ENCODE measurements at regions of chr6 and their contacts with region 1.

Region 1: GRCh38 chr6:52130440-52130839 is 43.0 kb upstream of the PKHD1 start:
- DNase-seq: no peak
- ATAC-seq: no peak
- H3K4me3 ChIP-seq: no peak overlapping the region
- H3K27ac ChIP-seq: no peak overlapping the region
- H3K4me1 ChIP-seq: no peaks in the 10 kb centered on the region
- H3K27me3 ChIP-seq: peaks cover 2 to 3% of the 10 kb centered on the region in 2 experiments; a peak in 2 of 4 replicates
- CTCF ChIP-seq: no peak
- EP300 ChIP-seq: no peak
- POLR2A ChIP-seq: no peak
- RAD21 ChIP-seq: no peak

Region 2: GRCh38 chr6:52009466-52010140 is 120.8 kb before region 1 on chr6:
- CTCF ChIA-PET with region 1: no interaction called
- POLR2A ChIA-PET with region 1: no interaction called
- RAD21 ChIA-PET with region 1: no interaction called
- SMC1A ChIA-PET with region 1: no interaction called
- in situ Hi-C with region 1: no loop called
- intact Hi-C with region 1: no loop called
- DNase-seq: no peak
- ATAC-seq: no peak
- H3K4me3 ChIP-seq: no peak overlapping the region
- H3K27ac ChIP-seq: no peak overlapping the region
- H3K4me1 ChIP-seq: no peaks in the 10 kb centered on the region
- H3K27me3 ChIP-seq: no peaks in the 10 kb centered on the region
- CTCF ChIP-seq: no peak
- EP300 ChIP-seq: no peak
- POLR2A ChIP-seq: no peak
- RAD21 ChIP-seq: no peak

Region 3: GRCh38 chr6:52081237-52081636 is 49.2 kb before region 1 on chr6:
- CTCF ChIA-PET with region 1: no interaction called
- POLR2A ChIA-PET with region 1: no interaction called
- RAD21 ChIA-PET with region 1: no interaction called
- SMC1A ChIA-PET with region 1: no interaction called
- in situ Hi-C with region 1: no loop called
- intact Hi-C with region 1: loop called (anchors 5 kb)
- DNase-seq: no peak
- ATAC-seq: no peak
- H3K4me3 ChIP-seq: no peak overlapping the region
- H3K27ac ChIP-seq: no peak overlapping the region
- H3K4me1 ChIP-seq: no peaks in the 10 kb centered on the region
- H3K27me3 ChIP-seq: peaks cover 0 to 5% of the 10 kb centered on the region in 2 experiments; a peak in 1 of 4 replicates
- CTCF ChIP-seq: no peak
- EP300 ChIP-seq: no peak
- POLR2A ChIP-seq: no peak
- RAD21 ChIP-seq: no peak

Measured in GM12878 (cell line).